GM12878 (cell line): ENCODE measurements at regions of chr6 and their contacts with region 1.

Region 1: GRCh38 chr6:20056350-20056992 is 155.8 kb downstream of the MBOAT1 start:
- DNase-seq: peak; percentile 8
- ATAC-seq: peak; percentile 65
- H3K4me3 ChIP-seq: no peak overlapping the region
- H3K27ac ChIP-seq: no peak overlapping the region
- H3K4me1 ChIP-seq: no peaks in the 10 kb centered on the region
- H3K27me3 ChIP-seq: no peaks in the 10 kb centered on the region
- CTCF ChIP-seq: peak; percentile 30 to 55 (median 35); a peak in 5 of 6 replicates
- EP300 ChIP-seq: no peak
- POLR2A ChIP-seq: no peak
- RAD21 ChIP-seq: peak; percentile 62

Region 2: DNA sequence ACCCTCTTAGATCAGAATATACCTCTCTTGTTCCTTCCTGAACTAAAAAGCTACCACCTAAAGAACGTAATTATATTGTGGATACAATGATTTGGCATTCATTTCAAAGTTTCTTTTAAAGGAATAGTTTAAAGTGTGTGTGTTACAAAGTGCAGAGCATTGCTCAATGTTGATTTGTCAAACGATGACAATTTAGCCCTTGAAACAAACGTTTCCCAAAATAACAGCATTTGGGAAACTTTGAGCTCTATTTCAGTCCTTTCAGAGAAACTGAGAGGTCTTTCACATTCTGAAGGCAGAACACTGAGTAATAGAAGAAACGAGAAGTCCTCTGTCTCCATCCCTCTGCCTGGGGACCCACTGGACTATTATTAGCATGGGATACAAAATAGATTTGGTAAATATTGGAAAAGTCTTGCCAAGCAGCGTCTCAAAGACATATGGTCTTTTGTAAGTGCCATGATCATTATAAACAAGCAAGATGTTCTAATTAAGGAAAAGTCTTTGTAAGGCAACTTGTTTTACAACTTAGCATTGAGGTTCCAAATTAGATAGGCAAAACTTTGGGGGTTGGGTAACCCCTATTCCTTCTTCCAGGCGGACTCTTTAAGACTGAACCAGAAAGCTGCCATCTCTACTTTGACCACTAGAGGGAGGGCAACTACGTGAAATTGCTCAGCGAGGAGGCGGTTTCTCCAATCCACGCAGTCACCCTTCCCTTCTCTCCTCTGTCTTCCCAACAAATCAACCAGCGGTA is 1460.5 kb before region 1 on chr6:
- CTCF ChIA-PET with region 1: interaction called, 3 read pairs
- POLR2A ChIA-PET with region 1: no interaction called
- RAD21 ChIA-PET with region 1: no interaction called
- SMC1A ChIA-PET with region 1: interaction called, 4 read pairs
- in situ Hi-C with region 1: loop called (anchors 10 kb)
- intact Hi-C with region 1: no loop called
- DNase-seq: no peak
- ATAC-seq: peak; percentile 89
- H3K4me3 ChIP-seq: no peak overlapping the region
- H3K27ac ChIP-seq: no peak overlapping the region
- H3K4me1 ChIP-seq: no peaks in the 10 kb centered on the region
- H3K27me3 ChIP-seq: no peaks in the 10 kb centered on the region
- CTCF ChIP-seq: peak; percentile 84 to 95 (median 92)
- EP300 ChIP-seq: no peak
- POLR2A ChIP-seq: no peak
- RAD21 ChIP-seq: peak; percentile 78

Region 3: DNA sequence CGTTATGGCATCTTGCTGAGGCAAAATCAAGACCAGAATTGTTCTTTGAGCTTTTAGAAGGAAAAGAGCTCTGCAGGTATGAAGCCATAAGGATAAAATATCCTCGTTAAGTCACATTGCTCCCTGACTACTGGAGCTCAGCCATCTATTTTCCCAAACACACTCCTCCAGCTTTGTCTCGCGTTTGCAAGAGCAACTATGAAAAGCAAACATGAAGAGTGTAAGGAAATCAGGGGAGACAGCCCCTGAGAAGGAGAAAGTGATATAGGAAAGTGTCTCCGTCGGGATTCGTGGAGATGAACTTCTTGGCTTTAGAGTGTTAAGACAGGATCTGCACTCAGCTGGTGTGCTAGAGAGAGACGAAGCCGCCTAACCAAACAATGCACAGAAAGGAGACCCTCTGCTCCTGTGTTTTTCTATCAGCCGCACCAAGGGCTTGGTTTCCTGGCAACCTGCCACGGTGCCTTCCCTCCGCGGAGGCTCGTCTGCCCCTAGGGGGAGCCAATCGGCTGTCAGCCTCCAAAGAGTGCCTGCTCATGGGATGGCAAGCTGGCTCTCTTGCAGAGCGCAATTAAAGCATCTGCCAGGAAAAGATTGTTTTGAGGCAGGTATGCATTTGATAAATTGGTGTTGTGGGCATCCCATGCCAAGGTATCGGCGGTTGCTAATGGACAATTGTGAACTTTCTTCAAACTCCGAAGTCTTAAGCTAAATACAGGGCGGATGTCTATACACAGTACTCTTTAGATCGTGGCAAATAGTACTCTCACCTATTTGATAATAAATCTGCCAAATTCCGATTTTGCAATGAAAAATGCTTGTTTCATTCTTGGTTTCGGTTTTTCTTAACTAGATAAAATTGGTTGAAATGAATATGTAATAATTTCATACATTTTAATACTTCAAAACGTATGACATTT is 1066.2 kb before region 1 on chr6:
- CTCF ChIA-PET with region 1: no interaction called
- POLR2A ChIA-PET with region 1: no interaction called
- RAD21 ChIA-PET with region 1: no interaction called
- SMC1A ChIA-PET with region 1: no interaction called
- in situ Hi-C with region 1: loop called (anchors 10 kb)
- intact Hi-C with region 1: no loop called
- DNase-seq: no peak
- ATAC-seq: peak; percentile 87
- H3K4me3 ChIP-seq: no peak overlapping the region
- H3K27ac ChIP-seq: no peak overlapping the region
- H3K4me1 ChIP-seq: no peaks in the 10 kb centered on the region
- H3K27me3 ChIP-seq: no peaks in the 10 kb centered on the region; a peak in 2 of 4 replicates
- CTCF ChIP-seq: peak; percentile 56 to 71 (median 61)
- EP300 ChIP-seq: no peak
- POLR2A ChIP-seq: no peak
- RAD21 ChIP-seq: 0 out of 2 replicates have a peak, but pooled peaks have one; percentile 26

Region 4: GRCh38 chr6:19024737-19025136 is 1031.7 kb before region 1 on chr6:
- CTCF ChIA-PET with region 1: no interaction called
- POLR2A ChIA-PET with region 1: no interaction called
- RAD21 ChIA-PET with region 1: interaction called, 3 read pairs
- SMC1A ChIA-PET with region 1: interaction called, 3 read pairs
- in situ Hi-C with region 1: no loop called
- intact Hi-C with region 1: loop called (anchors 10 kb)
- DNase-seq: no peak
- ATAC-seq: peak; percentile 38; the same call in 1 of the 3 replicates
- H3K4me3 ChIP-seq: no peak overlapping the region
- H3K27ac ChIP-seq: no peak overlapping the region
- H3K4me1 ChIP-seq: no peaks in the 10 kb centered on the region
- H3K27me3 ChIP-seq: no peaks in the 10 kb centered on the region
- CTCF ChIP-seq: peak in 2 of 3 experiments; percentile 16 to 31; a peak in 2 of 6 replicates
- EP300 ChIP-seq: no peak
- POLR2A ChIP-seq: no peak
- RAD21 ChIP-seq: peak; percentile 39

Region 5: GRCh38 chr6:19789100-19789805 is 267.2 kb before region 1 on chr6:
- CTCF ChIA-PET with region 1: no interaction called
- POLR2A ChIA-PET with region 1: no interaction called
- RAD21 ChIA-PET with region 1: no interaction called
- SMC1A ChIA-PET with region 1: no interaction called
- in situ Hi-C with region 1: no loop called
- intact Hi-C with region 1: no loop called
- DNase-seq: no peak
- ATAC-seq: no peak
- H3K4me3 ChIP-seq: no peak overlapping the region
- H3K27ac ChIP-seq: no peak overlapping the region
- H3K4me1 ChIP-seq: no peaks in the 10 kb centered on the region
- H3K27me3 ChIP-seq: no peaks in the 10 kb centered on the region
- CTCF ChIP-seq: no peak
- EP300 ChIP-seq: no peak
- POLR2A ChIP-seq: no peak
- RAD21 ChIP-seq: no peak

Region 6: DNA sequence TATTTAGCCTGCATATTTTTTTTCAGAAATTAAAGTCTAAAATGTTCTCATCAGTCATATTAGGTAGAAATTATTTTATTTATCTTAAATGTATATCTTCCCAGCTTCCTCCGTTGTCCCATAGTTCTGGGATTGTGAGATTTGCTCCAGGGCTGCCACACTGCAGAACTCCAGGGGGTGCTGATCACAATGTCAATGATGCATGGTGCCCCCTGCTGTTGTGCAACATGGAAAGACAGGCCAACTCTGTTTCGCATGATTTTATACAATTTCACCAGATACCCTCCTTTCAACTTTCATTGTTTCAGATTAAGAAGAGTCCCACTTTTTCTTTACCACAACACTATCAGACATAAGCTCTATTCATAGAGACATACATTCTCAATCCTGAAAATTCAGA is 183.4 kb before region 1 on chr6:
- CTCF ChIA-PET with region 1: no interaction called
- POLR2A ChIA-PET with region 1: no interaction called
- RAD21 ChIA-PET with region 1: no interaction called
- SMC1A ChIA-PET with region 1: no interaction called
- in situ Hi-C with region 1: no loop called
- intact Hi-C with region 1: loop called (anchors 10 kb)
- DNase-seq: no peak
- ATAC-seq: no peak
- H3K4me3 ChIP-seq: no peak overlapping the region
- H3K27ac ChIP-seq: no peak overlapping the region
- H3K4me1 ChIP-seq: no peaks in the 10 kb centered on the region
- H3K27me3 ChIP-seq: no peaks in the 10 kb centered on the region
- CTCF ChIP-seq: peak in 1 of 3 experiments; percentile 9; a peak in 1 of 6 replicates
- EP300 ChIP-seq: no peak
- POLR2A ChIP-seq: no peak
- RAD21 ChIP-seq: no peak